Naive thymus-derived CD4-positive, alpha-beta T cell (primary cell): ENCODE measurements at regions of chr1 and their contacts with region 1.

Region 1: DNA sequence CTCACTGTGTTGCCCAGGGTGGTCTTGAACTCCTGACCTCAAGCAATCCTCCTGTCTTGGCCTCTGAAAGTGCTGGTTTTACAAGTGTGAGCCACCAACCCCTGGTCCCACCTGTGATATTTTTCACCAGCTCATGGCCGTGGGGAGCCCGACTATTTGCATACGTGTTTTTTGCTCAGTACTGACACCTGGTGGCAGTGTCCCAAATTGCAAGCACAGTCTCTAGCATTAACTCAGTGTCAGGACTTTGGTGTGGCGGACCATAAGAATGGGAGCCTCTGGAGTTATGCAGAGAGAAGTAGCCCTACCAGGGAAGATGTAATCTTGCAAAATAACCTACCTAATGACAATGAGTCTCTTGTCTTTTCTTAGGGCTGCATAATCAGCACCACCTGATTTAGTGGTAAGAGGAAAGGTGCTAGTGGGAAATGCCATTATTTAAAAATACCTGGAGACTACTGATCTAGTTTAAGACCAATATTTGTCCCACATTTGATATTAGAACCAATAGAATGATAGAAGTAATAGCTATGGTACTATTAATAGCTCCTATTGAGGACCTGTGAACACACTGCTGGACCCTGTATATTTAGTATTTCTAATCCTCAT is 305.4 kb downstream of the DISC1 start:
- DNase-seq: peak in 3 of 9 donors; percentile 10 to 29 (median 23)
- ATAC-seq: no peak
- H3K4me3 ChIP-seq: no peak overlapping the region
- H3K4me3 Mint-ChIP-seq: no peak overlapping the region
- H3K27ac ChIP-seq: no peak overlapping the region
- H3K27ac Mint-ChIP-seq: no peak overlapping the region
- H3K4me1 ChIP-seq: peaks cover 7 to 18% of the 10 kb centered on the region in 2 donors
- H3K4me1 Mint-ChIP-seq: peaks cover 5 to 39% (median 27%) of the 10 kb centered on the region in 7 donors
- H3K27me3 ChIP-seq: no peaks in the 10 kb centered on the region
- H3K27me3 Mint-ChIP-seq: peaks cover 0 to 15% (median 0%) of the 10 kb centered on the region in 5 donors

Region 2: GRCh38 chr1:231918239-231919015 is 13.5 kb before region 1 on chr1:
- CTCF ChIA-PET with region 1: interaction called, 7 read pairs
- POLR2A ChIA-PET with region 1: interaction called, 4 read pairs
- intact Hi-C with region 1: loop called in 1 of 2 experiments (anchors 1 kb)
- DNase-seq: peak in 7 of 9 donors; percentile 26 to 57 (median 44)
- ATAC-seq: peak; percentile 40
- H3K4me3 ChIP-seq: peak overlapping the region; percentile 15
- H3K4me3 Mint-ChIP-seq: peak overlapping the region; percentile 64 to 90 (median 80)
- H3K27ac ChIP-seq: peak overlapping the region; percentile 61
- H3K27ac Mint-ChIP-seq: peak overlapping the region in 8 of 9 donors; percentile 80 to 94 (median 88)
- H3K4me1 ChIP-seq: peaks cover 57 to 63% of the 10 kb centered on the region in 2 donors
- H3K4me1 Mint-ChIP-seq: peaks cover 52 to 90% (median 83%) of the 10 kb centered on the region in 7 donors
- H3K27me3 ChIP-seq: no peaks in the 10 kb centered on the region
- H3K27me3 Mint-ChIP-seq: peaks cover 0 to 28% (median 0%) of the 10 kb centered on the region in 5 donors